Calu3 (cell line): ENCODE measurements at regions of chr11 and their contacts with region 1.

Region 1: DNA sequence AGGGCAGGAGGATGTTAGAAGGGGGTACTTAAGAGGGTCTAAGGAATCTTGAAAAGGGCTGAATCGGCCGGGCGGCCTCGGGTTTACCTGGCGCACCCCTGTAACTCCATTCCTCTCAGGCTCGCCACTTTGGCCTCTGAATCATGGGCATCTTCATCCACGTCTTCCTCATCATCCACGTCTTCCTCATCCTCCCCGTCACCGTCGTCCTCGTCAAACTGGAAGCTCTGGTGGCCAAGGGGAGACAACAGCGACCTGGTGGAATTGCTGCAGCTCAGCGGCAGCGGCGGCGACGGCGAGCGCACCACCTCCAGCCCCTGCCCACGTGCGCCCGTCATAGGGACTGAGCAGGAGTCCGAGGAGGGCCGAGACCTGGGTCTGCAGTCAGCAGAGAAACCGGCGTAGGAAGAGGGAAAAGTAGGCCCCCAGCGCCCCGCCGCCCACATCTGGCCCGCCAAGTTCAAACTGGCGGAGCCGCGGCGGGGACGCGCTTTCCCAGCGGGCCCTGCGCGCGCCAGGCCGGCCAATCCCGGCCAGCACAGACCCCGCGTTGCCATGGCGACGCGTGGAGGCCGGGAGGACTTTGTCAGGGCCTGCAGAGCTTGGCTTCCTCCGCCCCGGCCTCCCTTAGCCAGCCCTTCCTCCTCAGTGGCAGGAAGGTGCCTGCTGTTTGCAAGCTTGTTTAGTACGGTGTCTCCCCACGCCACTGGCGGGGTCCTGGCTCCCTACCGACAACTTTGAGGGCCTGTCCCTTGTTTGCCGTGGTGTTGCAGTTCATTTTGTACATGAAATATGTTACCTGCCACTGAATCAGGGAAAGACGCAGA is at the start of gene CCDC34:
- DNase-seq: peak; percentile 92
- H3K4me3 Mint-ChIP-seq: peak within 1 kb of the TSS; percentile 97
- H3K27ac Mint-ChIP-seq: peak within 1 kb of the TSS; percentile 82
- H3K4me1 Mint-ChIP-seq: peaks cover 41% of the 10 kb centered on the region
- H3K27me3 Mint-ChIP-seq: no peaks in the 10 kb centered on the region
- CTCF ChIP-seq: no peak
- total RNA-seq, gene CCDC34: 17.6 and 21.6 TPM in 2 replicates

Region 2: GRCh38 chr11:26703411-26704191 is 659.4 kb before region 1 on chr11:
- CTCF ChIA-PET with region 1: no interaction called
- intact Hi-C with region 1: no loop called
- DNase-seq: no peak
- H3K4me3 Mint-ChIP-seq: no peak overlapping the region
- H3K27ac Mint-ChIP-seq: no peak overlapping the region
- H3K4me1 Mint-ChIP-seq: peaks cover 8% of the 10 kb centered on the region
- H3K27me3 Mint-ChIP-seq: peaks cover 8% of the 10 kb centered on the region
- CTCF ChIP-seq: no peak

Region 3: DNA sequence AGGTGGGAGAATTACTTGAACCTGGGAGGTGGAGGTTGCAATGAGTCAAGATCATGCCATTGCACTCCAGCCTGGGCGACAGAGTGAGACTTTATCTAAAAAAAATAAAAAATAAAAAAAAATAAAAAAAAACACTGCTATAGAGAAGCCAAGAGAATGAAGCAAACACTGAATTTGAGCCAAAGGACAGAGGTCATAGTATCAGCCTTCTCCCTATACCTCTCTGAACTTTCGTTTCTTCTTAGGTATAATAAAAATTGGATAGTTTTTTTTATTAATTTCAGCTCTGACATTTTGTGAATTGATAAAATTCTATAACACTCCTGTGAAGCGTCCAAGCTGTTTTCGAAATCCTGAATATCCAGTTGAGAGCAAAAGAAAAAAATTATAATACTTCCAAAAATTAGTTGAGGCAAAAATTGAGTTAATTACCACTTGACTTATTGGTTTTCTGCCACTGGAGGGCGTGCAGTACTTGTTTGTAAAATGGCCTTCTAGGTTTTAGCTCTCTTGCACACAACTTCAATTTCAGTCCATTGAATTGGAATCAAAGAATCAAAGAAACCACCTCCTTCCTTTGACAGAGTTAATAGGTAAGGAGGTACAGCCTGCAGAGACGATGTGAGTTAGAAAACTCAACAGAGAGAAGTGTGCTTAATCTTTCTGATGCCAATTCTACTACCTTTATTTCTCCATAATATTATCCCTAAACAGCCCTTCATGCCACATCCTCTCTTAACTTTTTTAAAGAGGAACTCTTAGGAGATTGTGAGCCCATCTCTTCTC is 179.1 kb before region 1 on chr11:
- CTCF ChIA-PET with region 1: no interaction called
- intact Hi-C with region 1: loop called (anchors 5 kb)
- DNase-seq: peak; percentile 57
- H3K4me3 Mint-ChIP-seq: no peak overlapping the region
- H3K27ac Mint-ChIP-seq: no peak overlapping the region
- H3K4me1 Mint-ChIP-seq: peaks cover 10% of the 10 kb centered on the region
- H3K27me3 Mint-ChIP-seq: peaks cover 14% of the 10 kb centered on the region
- CTCF ChIP-seq: peak; percentile 51

Region 4: GRCh38 chr11:27319072-27319471 is 43.9 kb before region 1 on chr11:
- CTCF ChIA-PET with region 1: no interaction called
- intact Hi-C with region 1: loop called (anchors 5 kb)
- DNase-seq: peak; percentile 13
- H3K4me3 Mint-ChIP-seq: peak overlapping the region; percentile 40
- H3K27ac Mint-ChIP-seq: peak overlapping the region; percentile 74
- H3K4me1 Mint-ChIP-seq: peaks cover 40% of the 10 kb centered on the region
- H3K27me3 Mint-ChIP-seq: no peaks in the 10 kb centered on the region
- CTCF ChIP-seq: no peak

Region 5: DNA sequence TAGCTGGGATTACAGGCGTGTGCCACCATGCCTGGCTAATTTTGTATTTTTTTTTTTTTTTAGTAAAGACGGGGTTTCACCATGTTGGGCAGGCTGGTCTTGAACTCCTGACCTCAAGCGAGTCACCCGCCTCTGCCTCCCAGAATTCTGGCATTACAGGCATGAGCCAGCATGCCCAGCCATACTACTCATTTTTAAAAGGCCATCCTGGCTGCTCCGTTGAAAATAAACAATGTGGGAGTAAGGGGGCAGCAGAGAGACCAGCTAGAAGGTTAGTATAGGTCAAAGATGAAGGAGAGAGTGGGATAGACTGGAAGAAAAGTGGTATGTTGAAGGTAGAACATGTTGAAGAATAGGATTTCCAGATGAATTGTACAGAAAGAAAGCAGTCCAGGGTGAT is 161.2 kb after region 1 on chr11:
- CTCF ChIA-PET with region 1: no interaction called
- intact Hi-C with region 1: no loop called
- DNase-seq: no peak
- H3K4me3 Mint-ChIP-seq: no peak overlapping the region
- H3K27ac Mint-ChIP-seq: no peak overlapping the region
- H3K4me1 Mint-ChIP-seq: no peaks in the 10 kb centered on the region
- H3K27me3 Mint-ChIP-seq: peaks cover 1% of the 10 kb centered on the region
- CTCF ChIP-seq: no peak